Activated T-helper 2 cell treated with anti-CD3 and anti-CD28 coated beads, Interferon-gamma antibody, Interleukin-2, Interleukin-4, amounts not matched to agents 10 μg/mL and 5 μg/mL and 100 μg/mL, durations not matched to agents 14 hours and 24 hours and 36 hours (primary cell): ENCODE measurements at regions of chr11 and their contacts with region 1.

Region 1: GRCh38 chr11:60195923-60196368 is 13.1 kb upstream of the MS4A6A start:
- DNase-seq: no peak
- H3K4me3 Mint-ChIP-seq: no peak overlapping the region
- H3K27ac Mint-ChIP-seq: peak overlapping the region; percentile 17
- H3K4me1 Mint-ChIP-seq: peaks cover 14% of the 10 kb centered on the region
- H3K27me3 Mint-ChIP-seq: peaks cover 6% of the 10 kb centered on the region

Region 2: DNA sequence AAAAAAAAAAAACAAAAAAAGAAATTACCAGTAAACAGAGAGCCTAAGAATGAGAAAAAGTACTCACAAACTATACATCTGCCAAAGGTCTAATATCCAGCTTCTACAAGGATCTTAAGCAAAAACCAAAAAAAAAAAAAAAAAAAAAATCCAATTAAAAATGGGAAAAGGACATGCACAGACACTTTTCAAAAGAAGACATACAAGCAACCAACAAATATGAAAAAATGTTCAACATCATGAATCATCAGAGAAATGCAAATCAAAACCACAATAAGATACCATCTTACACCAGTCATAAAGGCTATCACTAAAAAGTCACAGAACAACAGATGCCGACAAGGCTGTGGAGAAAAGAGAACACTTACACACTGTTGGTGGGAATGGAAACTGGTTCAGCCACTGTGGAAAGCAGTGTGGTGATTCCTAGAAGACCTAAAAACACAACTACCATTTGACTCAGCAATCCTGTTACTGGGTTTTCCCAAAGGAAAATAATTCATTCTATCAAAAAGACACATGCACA is 31.3 kb before region 1 on chr11:
- intact Hi-C with region 1: loop called (anchors 5 kb)
- DNase-seq: no peak
- H3K4me3 Mint-ChIP-seq: no peak overlapping the region
- H3K27ac Mint-ChIP-seq: no peak overlapping the region
- H3K4me1 Mint-ChIP-seq: peaks cover 6% of the 10 kb centered on the region
- H3K27me3 Mint-ChIP-seq: peaks cover 5% of the 10 kb centered on the region